H1 (cell line): ENCODE measurements at regions of chr6 and their contacts with region 1.

Region 1: DNA sequence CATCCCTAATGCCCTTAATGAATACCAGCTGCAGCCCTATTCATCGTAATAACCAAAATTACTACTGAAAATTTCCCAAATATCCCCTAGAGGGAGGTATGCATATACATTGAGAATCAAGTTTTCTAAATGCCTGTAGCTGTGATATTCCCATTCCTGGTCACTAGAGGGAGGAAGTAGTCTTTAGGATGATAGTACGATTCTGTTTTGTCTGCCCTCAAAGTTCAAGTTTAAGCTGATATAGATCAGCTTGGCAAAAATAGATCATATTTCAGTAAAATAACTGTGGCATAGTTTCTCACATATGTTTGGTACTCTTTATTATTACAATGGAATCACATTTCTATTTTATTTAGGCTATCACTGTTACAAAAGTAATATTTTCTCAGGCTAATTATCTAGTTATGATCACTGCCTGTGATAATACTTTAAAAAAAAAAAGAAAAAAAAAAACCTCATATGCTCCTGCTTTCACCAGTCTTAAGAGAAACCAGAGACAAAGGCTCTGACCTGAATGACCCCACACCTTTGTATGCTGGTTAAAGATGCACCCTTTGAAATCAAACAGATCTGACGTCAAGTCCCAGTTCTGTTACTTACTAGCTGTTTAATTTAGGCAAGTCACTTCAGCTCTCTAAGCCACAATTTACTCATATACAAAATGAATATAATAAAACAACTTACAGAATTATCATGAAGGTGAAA is 11.0 kb downstream of the TSPYL1 start:
- DNase-seq: no peak
- H3K4me3 ChIP-seq: no peak overlapping the region
- H3K27ac ChIP-seq: no peak overlapping the region
- H3K4me1 ChIP-seq: peaks cover 0 to 10% (median 7%) of the 10 kb centered on the region in 4 experiments; a peak in 5 of 7 replicates
- H3K27me3 ChIP-seq: no peaks in the 10 kb centered on the region
- CTCF ChIP-seq: peak in 2 of 3 experiments; percentile 81 to 95; a peak in 3 of 4 replicates
- EP300 ChIP-seq: no peak
- POLR2A ChIP-seq: no peak
- RAD21 ChIP-seq: peak; percentile 88

Region 2: DNA sequence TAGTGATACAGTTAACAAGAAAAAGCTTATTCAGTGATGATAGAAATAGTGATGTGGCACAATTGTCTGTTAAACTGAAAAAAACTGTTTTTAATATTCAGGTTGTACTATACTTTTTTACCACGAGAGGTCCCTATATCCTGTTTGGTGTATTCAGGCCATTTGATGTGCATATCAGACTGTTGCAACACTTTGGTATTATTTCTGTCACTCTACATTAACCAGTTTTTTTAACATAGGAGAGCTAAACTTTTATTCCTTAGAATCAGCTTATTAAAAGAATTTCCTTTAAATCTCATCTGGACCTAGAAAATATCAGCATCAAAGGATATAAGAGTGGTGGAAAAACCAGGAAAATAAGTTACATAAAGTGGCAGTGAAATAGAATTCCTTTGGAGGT is 51.7 kb before region 1 on chr6:
- CTCF ChIA-PET with region 1: interaction called, 19 read pairs
- POLR2A ChIA-PET with region 1: no interaction called
- DNase-seq: no peak
- H3K4me3 ChIP-seq: no peak overlapping the region
- H3K27ac ChIP-seq: no peak overlapping the region
- H3K4me1 ChIP-seq: no peaks in the 10 kb centered on the region
- H3K27me3 ChIP-seq: no peaks in the 10 kb centered on the region
- CTCF ChIP-seq: peak in 1 of 3 experiments; percentile 45; a peak in 2 of 4 replicates
- EP300 ChIP-seq: no peak
- POLR2A ChIP-seq: no peak
- RAD21 ChIP-seq: peak; percentile 31 to 36; a peak in 3 of 4 replicates

Region 3: GRCh38 chr6:116238083-116238482 is 30.7 kb before region 1 on chr6:
- CTCF ChIA-PET with region 1: interaction called, 10 read pairs
- POLR2A ChIA-PET with region 1: no interaction called
- DNase-seq: no peak
- H3K4me3 ChIP-seq: no peak overlapping the region
- H3K27ac ChIP-seq: no peak overlapping the region
- H3K4me1 ChIP-seq: no peaks in the 10 kb centered on the region
- H3K27me3 ChIP-seq: no peaks in the 10 kb centered on the region
- CTCF ChIP-seq: no peak
- EP300 ChIP-seq: no peak
- POLR2A ChIP-seq: no peak
- RAD21 ChIP-seq: no peak

Region 4: DNA sequence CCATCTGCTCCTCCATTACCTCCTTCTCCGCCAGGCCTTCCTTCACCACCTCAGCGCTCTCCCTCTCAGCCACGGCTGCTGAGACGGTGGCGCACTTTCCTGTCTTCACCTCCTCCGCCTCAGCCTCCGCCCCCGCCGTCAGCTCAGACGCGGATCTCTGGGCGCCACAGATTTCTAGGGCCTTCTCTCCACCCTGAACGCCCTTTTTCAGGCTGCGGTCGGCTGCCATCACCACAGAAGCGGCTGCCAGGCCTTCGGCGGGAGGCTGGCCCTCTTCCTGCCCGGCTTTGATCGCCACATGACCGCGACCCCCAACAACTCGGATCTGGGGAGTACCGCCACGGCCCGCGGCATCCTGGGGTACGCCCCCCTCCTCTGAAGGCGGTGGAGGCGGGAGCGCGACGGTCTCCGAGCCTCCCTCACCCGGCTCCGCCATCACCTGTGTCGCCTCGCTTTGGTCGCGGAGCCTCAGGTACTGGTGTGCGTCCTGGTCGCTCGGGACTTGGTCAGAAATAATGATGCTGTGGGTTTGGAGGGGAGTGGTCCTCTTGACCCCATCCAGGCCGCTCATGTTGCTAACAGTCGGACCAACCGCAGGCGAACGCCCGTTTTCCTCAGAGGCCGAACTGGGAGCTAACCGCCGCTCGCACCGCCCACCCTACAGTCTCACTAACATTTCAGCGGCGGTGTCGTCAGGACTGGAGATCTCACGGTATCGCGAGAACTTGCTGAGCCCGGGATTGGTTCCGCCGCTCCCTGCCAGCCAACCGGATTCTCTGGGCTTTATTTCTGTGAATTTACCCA is 10.7 kb after region 1 on chr6 and contains the start of gene TSPYL1:
- CTCF ChIA-PET with region 1: interaction called, 32 read pairs
- POLR2A ChIA-PET with region 1: interaction called, 25 read pairs
- DNase-seq: peak; percentile 84 to 95
- H3K4me3 ChIP-seq: peak within 1 kb of the TSS; percentile 89 to 100 (median 92)
- H3K27ac ChIP-seq: peak within 1 kb of the TSS; percentile 96
- H3K4me1 ChIP-seq: peaks cover 3 to 14% (median 10%) of the 10 kb centered on the region in 4 experiments; a peak in 5 of 7 replicates
- H3K27me3 ChIP-seq: no peaks in the 10 kb centered on the region
- CTCF ChIP-seq: no peak
- EP300 ChIP-seq: no peak
- POLR2A ChIP-seq: peak; percentile 90 to 99
- RAD21 ChIP-seq: 0 out of 4 replicates have a peak, but pooled peaks of 1 of the 2 experiments have one; percentile 5
- total RNA-seq, gene TSPYL1: 77.9 and 79.1 TPM in 2 replicates

Region 5: GRCh38 chr6:116561377-116562018 is 292.8 kb after region 1 on chr6:
- CTCF ChIA-PET with region 1: interaction called, 55 read pairs
- POLR2A ChIA-PET with region 1: no interaction called
- DNase-seq: peak in 1 of 2 experiments; percentile 83
- H3K4me3 ChIP-seq: no peak overlapping the region; a peak in 1 of 8 replicates
- H3K27ac ChIP-seq: no peak overlapping the region
- H3K4me1 ChIP-seq: no peaks in the 10 kb centered on the region
- H3K27me3 ChIP-seq: no peaks in the 10 kb centered on the region
- CTCF ChIP-seq: peak; percentile 38 to 88 (median 84)
- EP300 ChIP-seq: no peak
- POLR2A ChIP-seq: no peak
- RAD21 ChIP-seq: peak; percentile 87